ENCODE measurements at regions of chr7 and their contacts with region 1.

Region 1: DNA sequence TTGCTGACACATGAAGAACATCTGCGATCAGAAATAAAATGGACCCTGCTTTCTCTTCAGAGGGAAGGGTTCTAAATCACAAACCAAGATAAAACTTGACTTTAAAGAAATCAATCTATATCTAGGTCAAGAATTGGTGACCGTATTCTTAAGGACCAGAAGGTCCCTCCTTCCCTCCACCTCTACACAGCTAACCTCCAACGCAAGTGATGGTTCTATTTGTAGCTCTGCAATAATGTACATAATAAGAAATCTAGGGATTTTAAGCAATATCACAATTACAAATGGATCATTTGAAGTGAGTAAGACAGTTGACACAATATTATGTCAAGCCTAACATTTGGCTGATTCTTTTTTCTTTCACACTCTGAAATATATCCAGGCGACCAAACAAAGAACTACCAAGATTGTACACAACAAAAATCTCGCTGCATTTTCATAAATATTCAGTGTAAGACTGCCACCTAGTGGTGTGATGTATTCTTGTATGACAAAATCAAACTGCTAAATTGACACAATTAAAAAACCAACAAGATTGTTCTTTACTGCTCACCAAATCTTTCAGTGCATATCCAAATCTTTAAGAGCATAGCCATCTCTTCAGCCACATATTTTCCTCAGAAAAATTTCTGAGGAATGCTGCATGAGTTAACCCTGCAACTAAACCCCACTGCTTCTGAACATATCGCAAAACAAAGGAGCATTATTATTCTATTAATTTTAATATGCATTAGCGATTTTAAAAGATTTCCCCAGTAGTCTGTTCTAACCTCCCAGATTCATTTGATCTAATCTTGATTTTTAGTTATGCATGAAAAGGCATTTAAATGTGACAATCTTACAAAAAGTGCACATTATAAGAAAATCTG is 44.5 kb downstream of the ICA1 start:
- DNase-seq: peak in 1 of 2 donors; percentile 42
- H3K4me3 ChIP-seq: no peak overlapping the region
- CTCF ChIP-seq: peak in 1 of 3 donors; percentile 28
- POLR2A ChIP-seq: no peak

Region 2: DNA sequence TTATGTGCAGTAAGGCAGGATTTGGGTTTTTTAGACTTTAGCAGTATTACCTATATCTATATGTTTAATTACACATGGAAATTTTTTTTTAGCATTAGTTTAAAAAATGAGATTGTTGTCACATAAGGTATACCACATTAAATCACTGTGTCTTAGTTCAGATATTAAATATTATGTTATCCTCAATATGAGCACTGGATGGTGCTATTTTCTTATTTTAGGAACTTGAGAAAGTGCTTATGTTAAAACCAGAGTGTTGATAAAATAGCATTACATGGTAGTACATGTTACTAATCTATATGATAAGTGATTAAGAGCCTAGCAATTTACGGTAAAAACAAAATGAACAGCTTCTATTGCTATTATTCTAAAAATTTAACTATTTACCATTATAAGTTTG is 622.0 kb before region 1 on chr7:
- intact Hi-C with region 1: loop called (anchors 10 kb)
- DNase-seq: no peak
- H3K4me3 ChIP-seq: no peak overlapping the region
- CTCF ChIP-seq: no peak
- POLR2A ChIP-seq: no peak

Measured in lower leg skin (tissue), 4 donors.